ENCODE measurements at regions of chr12 and their contacts with region 1.

Region 1: GRCh38 chr12:89762498-89763188 is 54.0 kb upstream of the ATP2B1 start:
- DNase-seq: peak in 1 of 2 donors; percentile 42
- ATAC-seq: peak; percentile 83 to 93 (median 86)
- H3K4me3 ChIP-seq: no peak overlapping the region
- H3K4me3 Mint-ChIP-seq: peak overlapping the region; percentile 67
- H3K27ac ChIP-seq: no peak overlapping the region
- H3K27ac Mint-ChIP-seq: peak overlapping the region; percentile 88 to 89
- H3K4me1 ChIP-seq: peaks cover 10% of the 10 kb centered on the region
- H3K4me1 Mint-ChIP-seq: peaks cover 39 to 51% of the 10 kb centered on the region in 2 donors
- H3K27me3 ChIP-seq: no peaks in the 10 kb centered on the region
- H3K27me3 Mint-ChIP-seq: no peaks in the 10 kb centered on the region
- CTCF ChIP-seq: no peak

Region 2: DNA sequence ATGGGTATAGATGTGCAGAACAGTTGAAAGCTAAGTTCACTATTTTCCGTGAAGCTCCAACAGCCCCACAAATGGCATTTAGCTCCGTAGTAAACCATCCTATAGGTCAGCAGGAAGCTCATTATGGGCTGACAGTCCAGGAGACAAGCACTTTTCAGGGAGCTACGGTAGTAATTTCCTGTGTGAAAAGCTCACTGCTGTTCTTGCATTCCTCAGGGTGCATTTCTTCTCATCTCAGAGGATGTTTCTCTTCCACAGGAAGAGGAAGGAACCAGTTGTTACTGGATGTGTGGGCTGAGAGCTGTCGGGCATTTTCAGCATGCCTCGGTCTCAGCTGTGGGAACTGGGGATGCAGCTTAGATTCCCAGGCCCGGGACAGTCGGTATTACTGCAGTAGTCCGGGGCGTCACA is 310.8 kb before region 1 on chr12:
- intact Hi-C with region 1: no loop called
- DNase-seq: no peak
- ATAC-seq: no peak
- H3K4me3 ChIP-seq: no peak overlapping the region
- H3K4me3 Mint-ChIP-seq: no peak overlapping the region
- H3K27ac ChIP-seq: no peak overlapping the region
- H3K27ac Mint-ChIP-seq: peak overlapping the region in 1 of 2 donors; percentile 54
- H3K4me1 ChIP-seq: peaks cover 4% of the 10 kb centered on the region
- H3K4me1 Mint-ChIP-seq: peaks cover 32 to 34% of the 10 kb centered on the region in 2 donors
- H3K27me3 ChIP-seq: no peaks in the 10 kb centered on the region
- H3K27me3 Mint-ChIP-seq: no peaks in the 10 kb centered on the region
- CTCF ChIP-seq: no peak

Region 3: DNA sequence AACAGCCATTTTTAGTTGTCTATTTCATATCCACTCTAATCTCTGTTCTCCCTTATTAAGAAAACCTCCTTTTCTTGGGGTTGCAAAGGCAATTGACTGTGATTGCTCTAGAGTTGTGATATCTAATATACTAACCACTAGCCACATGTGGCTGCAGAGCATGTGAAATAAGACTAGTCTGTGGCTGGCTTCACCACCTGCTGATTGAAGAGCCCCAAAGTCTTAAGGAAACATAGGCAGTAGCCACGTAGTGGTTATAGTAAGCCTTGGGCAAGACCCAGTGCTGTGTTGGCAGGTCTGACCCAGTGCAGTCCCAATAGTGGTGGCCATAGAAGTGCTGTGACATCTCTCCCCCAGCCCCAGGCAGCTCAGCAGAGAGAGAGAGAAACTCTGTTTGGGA is 25.6 kb before region 1 on chr12:
- intact Hi-C with region 1: loop called (anchors 1 kb)
- DNase-seq: no peak
- ATAC-seq: peak; percentile 73 to 93 (median 76)
- H3K4me3 ChIP-seq: no peak overlapping the region
- H3K4me3 Mint-ChIP-seq: no peak overlapping the region
- H3K27ac ChIP-seq: no peak overlapping the region
- H3K27ac Mint-ChIP-seq: no peak overlapping the region
- H3K4me1 ChIP-seq: peaks cover 3% of the 10 kb centered on the region
- H3K4me1 Mint-ChIP-seq: peaks cover 16 to 19% of the 10 kb centered on the region in 2 donors
- H3K27me3 ChIP-seq: no peaks in the 10 kb centered on the region
- H3K27me3 Mint-ChIP-seq: peaks cover 10 to 13% of the 10 kb centered on the region in 2 donors
- CTCF ChIP-seq: no peak

Region 4: GRCh38 chr12:89862511-89863179 is 100.0 kb after region 1 on chr12:
- intact Hi-C with region 1: loop called (anchors 2 kb)
- DNase-seq: peak; percentile 23 to 81
- ATAC-seq: peak; percentile 52 to 79 (median 54)
- H3K4me3 ChIP-seq: peak overlapping the region; percentile 34
- H3K4me3 Mint-ChIP-seq: peak overlapping the region; percentile 86
- H3K27ac ChIP-seq: peak overlapping the region; percentile 97
- H3K27ac Mint-ChIP-seq: peak overlapping the region; percentile 94 to 96
- H3K4me1 ChIP-seq: peaks cover 16% of the 10 kb centered on the region
- H3K4me1 Mint-ChIP-seq: peaks cover 30 to 42% of the 10 kb centered on the region in 2 donors
- H3K27me3 ChIP-seq: no peaks in the 10 kb centered on the region
- H3K27me3 Mint-ChIP-seq: no peaks in the 10 kb centered on the region
- CTCF ChIP-seq: no peak

Region 5: DNA sequence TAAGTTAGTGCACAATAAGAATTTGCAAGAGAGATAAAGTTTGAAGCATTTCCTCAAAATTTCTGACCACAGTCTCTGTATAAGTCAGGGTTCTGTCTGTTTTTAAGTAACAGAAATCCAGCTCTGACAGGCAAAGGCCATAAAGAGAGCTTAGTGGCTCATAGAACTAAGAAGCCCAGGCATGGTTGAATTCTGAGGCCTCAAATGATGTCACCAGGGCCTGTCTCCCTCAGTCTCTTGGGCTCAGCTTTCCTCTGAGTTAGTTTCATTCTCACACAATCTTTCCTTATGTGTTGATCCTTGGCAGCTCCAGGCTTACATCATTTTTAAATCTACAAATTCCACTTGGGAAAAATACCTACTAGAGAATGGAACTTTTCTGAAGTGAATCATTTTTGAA is 119.4 kb after region 1 on chr12:
- intact Hi-C with region 1: loop called (anchors 1 kb)
- DNase-seq: peak in 1 of 2 donors; percentile 44
- ATAC-seq: no peak
- H3K4me3 ChIP-seq: no peak overlapping the region
- H3K4me3 Mint-ChIP-seq: peak overlapping the region; percentile 25
- H3K27ac ChIP-seq: peak overlapping the region; percentile 82
- H3K27ac Mint-ChIP-seq: peak overlapping the region; percentile 96
- H3K4me1 ChIP-seq: peaks cover 16% of the 10 kb centered on the region
- H3K4me1 Mint-ChIP-seq: peaks cover 33 to 45% of the 10 kb centered on the region in 2 donors
- H3K27me3 ChIP-seq: no peaks in the 10 kb centered on the region
- H3K27me3 Mint-ChIP-seq: peaks cover 0 to 2% of the 10 kb centered on the region in 2 donors
- CTCF ChIP-seq: no peak

Measured in natural killer cell (primary cell).